AG04449 (cell line): ENCODE measurements at regions of chr10 and their contacts with region 1.

Region 1: DNA sequence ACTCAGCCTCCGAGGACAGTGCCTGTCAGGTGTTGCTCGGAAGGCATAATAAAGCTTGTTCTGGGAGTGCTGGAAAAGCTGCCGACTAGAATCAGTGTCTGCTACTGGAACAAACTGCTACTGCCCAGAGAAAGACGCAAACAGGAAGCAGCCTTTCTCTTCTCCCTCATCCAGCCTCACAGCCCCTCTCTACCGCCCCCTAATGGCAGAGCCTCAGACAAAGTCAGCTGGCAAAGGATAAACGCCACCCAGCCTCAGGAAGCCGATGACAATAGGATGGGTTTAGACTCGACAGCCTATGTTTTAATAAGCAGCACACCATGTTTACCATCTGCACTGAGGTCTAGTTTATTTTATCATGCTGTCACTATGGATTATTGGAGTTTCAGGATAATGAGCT is 169.5 kb upstream of the LYZL1 start:
- DNase-seq: no peak
- H3K4me3 ChIP-seq: no peak overlapping the region
- CTCF ChIP-seq: peak; percentile 41

Region 2: GRCh38 chr10:29063806-29064644 is 55.3 kb before region 1 on chr10:
- CTCF ChIA-PET with region 1: no interaction called
- POLR2A ChIA-PET with region 1: no interaction called
- DNase-seq: no peak
- H3K4me3 ChIP-seq: no peak overlapping the region
- CTCF ChIP-seq: no peak

Region 3: GRCh38 chr10:29105531-29106215 is 13.7 kb before region 1 on chr10:
- CTCF ChIA-PET with region 1: interaction called, 13 read pairs
- POLR2A ChIA-PET with region 1: no interaction called
- DNase-seq: no peak
- H3K4me3 ChIP-seq: no peak overlapping the region
- CTCF ChIP-seq: no peak